ENCODE measurements at regions of chr10 and their contacts with region 1.

Region 1: DNA sequence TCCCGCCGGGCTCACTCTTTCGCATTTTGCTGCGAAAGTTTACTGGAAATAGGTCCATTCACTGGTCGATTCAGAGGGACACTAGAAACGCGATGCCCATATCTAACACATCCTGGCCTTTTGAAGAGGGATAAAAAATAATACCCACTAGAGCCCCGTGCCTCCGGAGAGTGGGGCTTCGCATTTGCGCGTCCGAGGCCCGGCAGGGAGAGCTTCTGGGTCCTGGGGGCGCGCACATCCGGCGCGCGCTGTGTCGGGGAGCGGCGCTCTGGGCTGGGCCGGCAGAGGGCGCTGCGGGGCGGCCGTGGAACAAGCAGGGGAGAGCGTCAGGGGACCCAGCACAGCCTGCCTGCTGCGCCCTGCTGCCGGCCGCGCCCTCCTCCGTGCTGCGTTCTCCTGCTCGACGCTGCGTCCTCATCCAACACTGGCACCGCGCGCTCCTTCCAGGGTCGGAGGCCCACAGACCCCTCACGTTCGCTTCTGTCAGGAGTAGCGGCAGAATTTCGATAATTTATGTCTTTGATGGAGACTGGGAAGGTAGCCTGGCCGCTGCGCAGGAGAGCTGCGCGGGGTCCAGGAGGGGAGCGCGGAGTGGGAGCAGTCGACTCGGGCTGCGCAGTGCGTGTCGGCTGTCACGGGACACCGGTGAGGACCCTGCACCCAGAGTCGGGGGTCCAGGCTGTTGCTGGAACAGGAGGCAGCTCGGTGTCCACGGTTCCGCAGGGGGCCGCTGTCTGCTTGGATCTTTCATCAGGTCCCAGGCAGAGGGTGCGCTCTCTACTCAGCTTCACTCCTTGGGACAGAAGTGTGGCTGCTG is 41.5 kb upstream of the ZNF32 start:
- DNase-seq: peak; percentile 72
- ATAC-seq: peak; percentile 98
- H3K4me3 ChIP-seq: peak overlapping the region; percentile 61
- H3K27ac ChIP-seq: peak overlapping the region; percentile 76
- H3K4me1 ChIP-seq: peaks cover 8% of the 10 kb centered on the region; the same call in 1 of the 2 replicates
- H3K27me3 ChIP-seq: no peaks in the 10 kb centered on the region
- CTCF ChIP-seq: peak; percentile 88
- POLR2A ChIP-seq: peak; percentile 42; the same call in 1 of the 2 replicates
- RAD21 ChIP-seq: peak; percentile 87

Region 2: GRCh38 chr10:43308986-43309385 is 381.2 kb before region 1 on chr10:
- CTCF ChIA-PET with region 1: no interaction called
- POLR2A ChIA-PET with region 1: no interaction called
- dilution Hi-C with region 1: no loop called
- in situ Hi-C with region 1: no loop called
- intact Hi-C with region 1: no loop called
- DNase-seq: no peak
- ATAC-seq: no peak
- H3K4me3 ChIP-seq: no peak overlapping the region
- H3K27ac ChIP-seq: no peak overlapping the region
- H3K4me1 ChIP-seq: no peaks in the 10 kb centered on the region
- H3K27me3 ChIP-seq: peaks cover 12% of the 10 kb centered on the region
- CTCF ChIP-seq: no peak
- POLR2A ChIP-seq: no peak
- RAD21 ChIP-seq: no peak

Region 3: GRCh38 chr10:43808136-43808535 is 118.0 kb after region 1 on chr10:
- CTCF ChIA-PET with region 1: interaction called, 3 read pairs
- POLR2A ChIA-PET with region 1: no interaction called
- dilution Hi-C with region 1: no loop called
- in situ Hi-C with region 1: no loop called
- intact Hi-C with region 1: loop called (anchors 5 kb)
- DNase-seq: peak; percentile 14
- ATAC-seq: no peak
- H3K4me3 ChIP-seq: no peak overlapping the region
- H3K27ac ChIP-seq: no peak overlapping the region
- H3K4me1 ChIP-seq: peaks cover 5% of the 10 kb centered on the region
- H3K27me3 ChIP-seq: peaks cover 12% of the 10 kb centered on the region; the same call in 1 of the 2 replicates
- CTCF ChIP-seq: no peak
- POLR2A ChIP-seq: no peak
- RAD21 ChIP-seq: no peak

Region 4: GRCh38 chr10:43863859-43864591 is 173.9 kb after region 1 on chr10:
- CTCF ChIA-PET with region 1: no interaction called
- POLR2A ChIA-PET with region 1: no interaction called
- dilution Hi-C with region 1: no loop called
- in situ Hi-C with region 1: no loop called
- intact Hi-C with region 1: no loop called
- DNase-seq: peak; percentile 85
- ATAC-seq: peak; percentile 56
- H3K4me3 ChIP-seq: no peak overlapping the region
- H3K27ac ChIP-seq: peak overlapping the region; percentile 91
- H3K4me1 ChIP-seq: peaks cover 34% of the 10 kb centered on the region
- H3K27me3 ChIP-seq: no peaks in the 10 kb centered on the region
- CTCF ChIP-seq: no peak
- POLR2A ChIP-seq: no peak
- RAD21 ChIP-seq: no peak

Region 5: DNA sequence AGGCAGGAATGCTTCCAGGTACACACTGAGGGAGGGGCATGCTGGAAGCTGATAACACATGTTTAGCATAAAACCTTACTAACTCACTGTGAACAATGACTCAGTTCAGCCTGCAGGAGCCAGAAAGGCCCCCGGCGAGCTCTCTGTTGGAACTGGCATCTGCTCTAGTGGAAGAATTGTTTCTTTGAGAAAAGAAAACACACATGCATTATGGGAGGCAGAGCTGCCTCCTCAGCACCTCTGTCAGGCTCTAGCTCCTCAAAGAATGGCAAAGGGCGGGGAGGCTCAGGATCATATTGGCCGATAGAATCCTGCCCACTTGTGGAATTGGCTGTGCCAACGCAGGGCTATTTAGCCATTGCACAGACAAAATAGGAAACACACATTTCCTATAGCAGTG is 356.4 kb after region 1 on chr10:
- CTCF ChIA-PET with region 1: interaction called, 5 read pairs
- POLR2A ChIA-PET with region 1: no interaction called
- dilution Hi-C with region 1: no loop called
- in situ Hi-C with region 1: no loop called
- intact Hi-C with region 1: loop called (anchors 1 kb)
- DNase-seq: peak; percentile 52
- ATAC-seq: peak; percentile 70
- H3K4me3 ChIP-seq: no peak overlapping the region
- H3K27ac ChIP-seq: no peak overlapping the region
- H3K4me1 ChIP-seq: peaks cover 7% of the 10 kb centered on the region
- H3K27me3 ChIP-seq: peaks cover 14% of the 10 kb centered on the region; the same call in 1 of the 2 replicates
- CTCF ChIP-seq: no peak
- POLR2A ChIP-seq: no peak
- RAD21 ChIP-seq: no peak

Region 6: GRCh38 chr10:44180321-44181168 is 490.4 kb after region 1 on chr10:
- CTCF ChIA-PET with region 1: no interaction called
- POLR2A ChIA-PET with region 1: no interaction called
- dilution Hi-C with region 1: no loop called
- in situ Hi-C with region 1: no loop called
- intact Hi-C with region 1: loop called (anchors 10 kb)
- DNase-seq: peak; percentile 95
- ATAC-seq: peak; percentile 83
- H3K4me3 ChIP-seq: no peak overlapping the region
- H3K27ac ChIP-seq: no peak overlapping the region
- H3K4me1 ChIP-seq: peaks cover 7% of the 10 kb centered on the region
- H3K27me3 ChIP-seq: no peaks in the 10 kb centered on the region
- CTCF ChIP-seq: no peak
- POLR2A ChIP-seq: no peak
- RAD21 ChIP-seq: no peak

Region 7: GRCh38 chr10:44864637-44865288 is 1174.6 kb after region 1 on chr10:
- CTCF ChIA-PET with region 1: no interaction called
- POLR2A ChIA-PET with region 1: no interaction called
- dilution Hi-C with region 1: no loop called
- in situ Hi-C with region 1: no loop called
- intact Hi-C with region 1: loop called (anchors 5 kb)
- DNase-seq: peak; percentile 75
- ATAC-seq: peak; percentile 94
- H3K4me3 ChIP-seq: peak overlapping the region; percentile 68
- H3K27ac ChIP-seq: peak overlapping the region; percentile 65
- H3K4me1 ChIP-seq: peaks cover 4% of the 10 kb centered on the region; the same call in 1 of the 2 replicates
- H3K27me3 ChIP-seq: peaks cover 3% of the 10 kb centered on the region; the same call in 1 of the 2 replicates
- CTCF ChIP-seq: peak; percentile 98
- POLR2A ChIP-seq: no peak
- RAD21 ChIP-seq: peak; percentile 94